ENCODE measurements at regions of chr20 and their contacts with region 1.

Region 1: GRCh38 chr20:10673988-10674711 is at the start of gene JAG1:
- DNase-seq: peak; percentile 82 to 98
- H3K4me3 ChIP-seq: peak within 1 kb of the TSS; percentile 86 to 90
- H3K27ac ChIP-seq: peak within 1 kb of the TSS; percentile 100
- H3K4me1 ChIP-seq: peaks cover 0 to 9% of the 10 kb centered on the region in 2 donors
- H3K27me3 ChIP-seq: no peaks in the 10 kb centered on the region
- CTCF ChIP-seq: no peak
- total RNA-seq, gene JAG1: 101 TPM

Region 2: GRCh38 chr20:10434467-10434831 is 239.7 kb before region 1 on chr20:
- intact Hi-C with region 1: loop called (anchors 1 kb)
- DNase-seq: peak; percentile 82 to 97
- H3K4me3 ChIP-seq: peak overlapping the region; percentile 86 to 96
- H3K27ac ChIP-seq: peak overlapping the region; percentile 83 to 84
- H3K4me1 ChIP-seq: peaks cover 8 to 19% of the 10 kb centered on the region in 2 donors
- H3K27me3 ChIP-seq: no peaks in the 10 kb centered on the region
- CTCF ChIP-seq: no peak

Region 3: GRCh38 chr20:10553326-10553984 is 120.7 kb before region 1 on chr20:
- intact Hi-C with region 1: loop called (anchors 1 kb)
- DNase-seq: peak in 1 of 2 donors; percentile 89
- H3K4me3 ChIP-seq: no peak overlapping the region
- H3K27ac ChIP-seq: no peak overlapping the region
- H3K4me1 ChIP-seq: peaks cover 3 to 47% of the 10 kb centered on the region in 2 donors
- H3K27me3 ChIP-seq: no peaks in the 10 kb centered on the region
- CTCF ChIP-seq: peak; percentile 69 to 83 (median 72)

Region 4: DNA sequence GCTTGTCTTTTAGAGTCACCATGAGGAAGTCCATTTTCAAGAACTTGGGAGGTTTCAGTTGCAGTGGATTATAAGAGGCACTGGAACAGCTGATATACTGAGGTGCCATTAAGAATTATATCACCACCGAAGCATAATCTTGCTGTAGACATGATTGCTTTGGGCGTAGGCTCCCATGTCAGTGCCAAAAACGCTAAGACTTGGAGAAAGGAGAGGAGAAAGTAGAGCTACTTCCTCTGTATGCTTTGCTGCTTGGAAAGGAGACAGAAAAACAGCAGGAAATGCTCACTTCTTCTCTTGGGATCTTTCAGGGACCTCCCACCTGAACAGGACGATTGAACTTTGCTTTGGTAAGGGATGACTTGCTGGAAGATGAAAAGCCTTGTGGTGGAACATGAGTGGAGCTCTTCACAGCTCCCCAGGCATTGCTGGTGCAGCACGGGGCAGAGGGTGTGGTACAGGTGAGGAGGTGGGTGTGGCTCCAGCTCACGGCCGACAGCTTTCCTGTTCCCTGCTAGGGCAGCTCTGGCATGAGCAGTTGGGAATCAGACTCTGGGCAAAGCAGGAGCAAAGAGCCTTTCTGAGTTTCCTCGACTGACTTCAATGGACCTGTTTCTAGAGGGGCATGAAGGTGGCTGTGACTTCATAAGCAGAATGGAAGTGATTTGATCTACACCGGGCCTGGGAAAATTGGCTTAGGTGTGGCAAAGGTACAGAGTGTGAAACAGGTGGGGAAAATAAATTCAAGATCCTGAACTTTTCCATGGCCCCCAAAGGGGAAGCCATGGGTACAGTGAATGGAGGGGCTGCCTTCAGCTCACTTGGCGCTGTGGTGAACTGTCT is 190.1 kb after region 1 on chr20:
- intact Hi-C with region 1: loop called (anchors 5 kb)
- DNase-seq: no peak
- H3K4me3 ChIP-seq: peak overlapping the region in 1 of 2 donors; percentile 0
- H3K27ac ChIP-seq: peak overlapping the region; percentile 59 to 72
- H3K4me1 ChIP-seq: peaks cover 0 to 25% of the 10 kb centered on the region in 2 donors
- H3K27me3 ChIP-seq: no peaks in the 10 kb centered on the region
- CTCF ChIP-seq: no peak

Region 5: DNA sequence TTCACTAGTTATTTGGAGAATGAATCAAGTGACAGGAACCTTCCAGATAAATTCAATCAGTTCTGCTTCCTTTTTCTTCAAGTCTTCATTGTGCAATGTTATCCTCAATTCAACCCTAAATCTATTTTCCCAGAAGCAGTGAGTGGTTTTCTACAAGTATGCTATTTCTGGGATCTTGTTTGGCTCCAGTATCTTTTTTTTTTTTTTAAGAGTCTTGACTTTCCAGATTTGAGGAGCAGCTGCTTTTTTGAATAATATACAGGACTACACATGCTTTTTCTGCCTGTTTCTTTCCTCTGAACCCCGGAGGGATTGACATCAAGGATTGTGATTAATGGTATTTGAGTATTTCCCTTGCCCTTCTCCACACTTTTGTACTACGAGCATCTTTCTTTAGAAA is 338.8 kb after region 1 on chr20:
- intact Hi-C with region 1: loop called (anchors 5 kb)
- DNase-seq: no peak
- H3K4me3 ChIP-seq: no peak overlapping the region
- H3K27ac ChIP-seq: peak overlapping the region in 1 of 2 donors; percentile 37
- H3K4me1 ChIP-seq: peaks cover 0 to 7% of the 10 kb centered on the region in 2 donors
- H3K27me3 ChIP-seq: no peaks in the 10 kb centered on the region
- CTCF ChIP-seq: no peak

Region 6: DNA sequence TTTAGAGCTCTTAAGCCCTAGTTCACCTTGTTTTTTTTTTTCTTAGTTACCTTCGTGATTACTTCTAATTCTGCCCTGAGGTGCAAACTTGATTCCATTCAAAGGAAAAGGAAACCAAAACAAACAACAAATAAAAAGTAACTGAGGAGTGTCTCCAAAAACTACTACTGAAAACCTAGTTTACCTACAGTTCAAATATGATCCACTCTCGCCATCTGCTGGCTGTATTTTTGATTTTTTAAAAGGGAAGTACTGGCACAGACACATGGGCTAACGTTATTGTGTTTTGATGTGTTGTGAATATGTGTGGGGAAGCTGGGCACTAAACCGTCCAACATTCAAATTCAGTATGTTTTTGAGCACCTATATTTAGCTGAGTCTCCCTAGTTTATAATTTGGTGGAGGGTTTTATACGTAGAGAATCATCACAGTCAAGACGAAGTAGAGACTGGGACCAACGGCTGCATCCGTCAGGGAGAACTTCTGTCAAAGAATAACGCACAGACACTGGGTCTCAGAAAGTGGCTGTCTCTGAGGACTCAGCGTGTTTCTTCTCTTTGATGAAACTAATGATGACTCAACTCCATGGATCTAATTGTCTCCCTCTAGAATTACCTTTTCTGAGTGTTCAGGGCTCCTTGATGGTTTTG is 870.0 kb after region 1 on chr20:
- intact Hi-C with region 1: loop called (anchors 5 kb)
- DNase-seq: peak in 1 of 2 donors; percentile 62
- H3K4me3 ChIP-seq: peak overlapping the region; percentile 31 to 39
- H3K27ac ChIP-seq: no peak overlapping the region
- H3K4me1 ChIP-seq: peaks cover 0 to 2% of the 10 kb centered on the region in 2 donors
- H3K27me3 ChIP-seq: no peaks in the 10 kb centered on the region
- CTCF ChIP-seq: peak; percentile 43 to 64 (median 52)

Measured in ascending aorta (tissue), 2 donors.